ENCODE measurements at regions of chr3 and their contacts with region 1.

Region 1: DNA sequence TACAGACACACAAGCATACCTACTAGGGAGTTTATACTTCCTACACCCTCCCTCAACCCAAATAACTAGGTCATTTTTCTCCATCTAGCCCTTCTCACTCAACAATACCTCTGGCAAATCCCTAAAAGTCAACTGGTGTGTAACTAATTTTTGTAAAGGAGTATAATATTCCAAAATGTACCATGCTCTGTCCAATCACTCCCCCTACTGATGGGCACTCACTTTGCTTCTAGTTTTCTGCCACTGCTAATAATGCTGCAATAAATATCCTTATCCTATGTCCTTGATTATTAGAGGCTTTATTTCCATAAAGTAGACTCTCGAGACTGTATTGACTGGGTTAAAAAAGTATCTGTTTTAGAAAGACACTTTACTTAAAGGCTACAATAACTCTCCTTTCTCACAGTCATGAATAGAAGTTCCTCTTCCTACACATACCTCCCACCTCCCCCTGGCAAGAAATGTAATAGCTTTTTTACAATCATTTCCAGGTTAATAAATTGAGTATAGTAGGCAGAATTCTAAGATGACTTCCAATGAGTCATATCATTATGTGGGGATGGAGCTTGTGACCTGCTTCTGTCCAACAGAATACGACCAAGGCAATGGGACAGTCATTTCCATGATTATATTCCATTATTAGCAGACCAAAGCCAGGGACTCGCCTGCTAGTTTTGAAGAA is 30.0 kb downstream of the SHQ1 start:
- DNase-seq: no peak
- ATAC-seq: no peak

Region 2: GRCh38 chr3:71725279-71725991 is 1092.8 kb before region 1 on chr3 and contains the start of gene EIF4E3:
- intact Hi-C with region 1: loop called (anchors 5 kb)
- DNase-seq: peak; percentile 79
- ATAC-seq: peak; percentile 72
- total RNA-seq, gene EIF4E3: 49.2 TPM

Region 3: DNA sequence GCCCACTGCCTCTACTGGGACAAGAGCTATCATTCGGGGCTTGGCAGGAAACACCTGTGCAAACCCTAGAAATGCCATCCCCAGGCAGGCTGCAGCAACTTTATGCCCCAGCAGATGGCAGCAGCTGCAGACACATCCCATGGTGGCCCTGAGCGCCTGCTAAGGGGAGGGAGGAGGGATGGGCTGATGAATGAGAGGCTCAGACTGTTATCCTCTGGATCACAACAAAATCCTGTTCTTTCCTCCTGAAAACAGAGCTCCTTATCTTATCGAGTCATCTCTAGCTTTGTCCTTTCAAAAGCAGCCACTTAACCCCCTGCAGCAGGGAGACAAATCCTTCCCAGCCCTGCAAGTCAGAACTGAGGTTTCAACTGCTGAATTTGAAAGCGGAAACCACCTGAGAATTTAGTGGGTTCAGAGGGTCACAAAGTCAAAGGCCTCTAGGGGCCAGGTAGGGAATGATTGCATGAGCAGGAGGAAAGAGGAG is 942.7 kb before region 1 on chr3:
- intact Hi-C with region 1: loop called (anchors 2 kb)
- DNase-seq: peak; percentile 85
- ATAC-seq: peak; percentile 90

Region 4: GRCh38 chr3:71955240-71956068 is 862.8 kb before region 1 on chr3:
- intact Hi-C with region 1: loop called (anchors 5 kb)
- DNase-seq: no peak
- ATAC-seq: peak; percentile 58

Region 5: DNA sequence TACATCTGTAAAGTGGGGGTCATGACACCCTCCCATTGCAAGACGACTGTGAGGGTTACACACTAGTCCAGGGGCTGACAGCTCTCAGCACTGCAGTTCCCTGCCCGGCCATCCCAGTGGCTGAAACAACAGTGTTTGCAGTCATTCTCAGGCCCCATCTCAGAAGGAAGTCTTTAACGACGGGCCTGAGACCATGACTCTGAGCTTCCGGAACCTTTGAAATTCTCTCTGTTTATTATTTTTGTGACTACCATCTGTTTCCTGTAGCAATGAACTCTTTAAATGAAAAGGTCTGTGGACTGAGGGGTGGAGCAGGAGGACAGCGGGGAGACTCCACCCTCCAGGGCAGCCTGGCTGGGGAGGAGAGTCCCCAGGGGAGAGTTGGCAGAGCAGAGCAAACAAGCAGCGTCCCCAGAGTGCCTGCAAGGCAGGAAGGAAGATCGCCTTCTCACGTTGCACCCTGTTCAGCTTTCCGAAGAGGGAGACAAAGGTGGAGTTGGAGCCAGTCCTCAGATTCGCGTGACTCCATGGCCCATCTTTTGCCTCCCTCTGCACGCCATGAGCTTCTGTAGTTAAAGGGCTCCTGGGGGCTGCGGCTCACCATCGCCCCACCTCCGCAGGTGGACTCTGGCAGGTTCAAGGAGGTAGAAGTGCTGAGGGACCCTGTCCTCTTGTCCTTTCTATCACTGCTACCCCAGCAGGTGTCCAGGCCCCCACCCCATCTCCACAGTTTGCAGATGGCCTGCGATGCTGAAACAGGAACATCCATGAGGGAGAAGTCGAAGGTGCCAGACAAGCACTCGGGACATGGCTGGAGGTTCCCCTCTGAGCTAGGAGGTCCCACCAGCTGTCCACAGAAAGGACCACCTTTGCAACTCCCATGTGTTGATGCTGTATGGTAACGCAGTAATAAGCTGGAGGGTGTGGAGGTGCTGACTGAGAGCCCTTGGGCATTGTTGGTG is 507.5 kb before region 1 on chr3:
- intact Hi-C with region 1: loop called (anchors 10 kb)
- DNase-seq: no peak
- ATAC-seq: peak; percentile 75

Region 6: GRCh38 chr3:72447059-72447946 is 370.9 kb before region 1 on chr3:
- intact Hi-C with region 1: loop called (anchors 2 kb)
- DNase-seq: peak; percentile 96
- ATAC-seq: peak; percentile 98

Region 7: GRCh38 chr3:72665701-72666443 is 152.4 kb before region 1 on chr3:
- intact Hi-C with region 1: loop called (anchors 2 kb)
- DNase-seq: no peak
- ATAC-seq: no peak

Region 8: DNA sequence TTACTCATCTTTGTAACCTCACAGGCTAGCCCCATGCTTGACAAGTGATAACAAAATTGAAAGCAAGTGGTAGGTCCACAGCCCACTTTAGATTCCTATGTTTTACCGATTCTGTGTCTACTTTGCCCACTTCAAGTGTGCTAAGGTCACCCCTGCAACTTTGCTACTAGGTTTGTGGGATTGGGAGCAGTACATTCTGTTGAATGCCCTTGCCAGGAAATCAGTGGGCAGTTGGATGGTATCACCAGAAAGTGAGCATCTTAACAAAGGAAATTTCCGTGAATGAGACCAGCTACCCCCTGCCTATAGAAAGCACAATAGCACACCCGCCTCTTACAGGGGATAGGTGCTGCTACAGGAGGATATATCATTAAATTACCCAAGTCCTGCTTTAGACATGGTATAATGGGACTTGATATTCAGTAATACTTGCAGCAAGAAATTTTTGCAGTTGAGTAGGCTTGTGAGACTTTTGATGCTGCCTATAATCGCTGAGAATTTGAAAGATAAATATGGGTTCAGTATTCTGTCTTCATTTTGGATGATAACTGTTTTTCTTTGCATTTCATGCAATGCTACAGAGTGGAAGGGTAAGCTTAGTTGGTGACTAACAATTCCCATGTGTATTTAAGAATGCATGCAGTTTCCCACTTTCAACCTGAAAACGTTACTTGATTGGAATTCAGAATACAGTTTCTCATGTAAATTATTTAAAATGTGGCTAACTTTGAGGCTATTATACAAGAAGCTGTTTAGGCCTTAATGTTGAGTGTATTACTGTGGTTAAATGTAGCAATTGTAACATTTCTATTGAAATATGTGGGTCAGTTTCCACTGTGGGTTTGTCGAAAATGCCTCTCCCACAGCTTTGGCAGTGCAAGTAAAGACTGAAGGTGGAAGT is 252.7 kb after region 1 on chr3:
- intact Hi-C with region 1: no loop called
- DNase-seq: no peak
- ATAC-seq: peak; percentile 21

Measured in Right ventricle myocardium inferior (tissue), 1 donor.